ENCODE measurements at regions of chr17 and their contacts with region 1.

Region 1: DNA sequence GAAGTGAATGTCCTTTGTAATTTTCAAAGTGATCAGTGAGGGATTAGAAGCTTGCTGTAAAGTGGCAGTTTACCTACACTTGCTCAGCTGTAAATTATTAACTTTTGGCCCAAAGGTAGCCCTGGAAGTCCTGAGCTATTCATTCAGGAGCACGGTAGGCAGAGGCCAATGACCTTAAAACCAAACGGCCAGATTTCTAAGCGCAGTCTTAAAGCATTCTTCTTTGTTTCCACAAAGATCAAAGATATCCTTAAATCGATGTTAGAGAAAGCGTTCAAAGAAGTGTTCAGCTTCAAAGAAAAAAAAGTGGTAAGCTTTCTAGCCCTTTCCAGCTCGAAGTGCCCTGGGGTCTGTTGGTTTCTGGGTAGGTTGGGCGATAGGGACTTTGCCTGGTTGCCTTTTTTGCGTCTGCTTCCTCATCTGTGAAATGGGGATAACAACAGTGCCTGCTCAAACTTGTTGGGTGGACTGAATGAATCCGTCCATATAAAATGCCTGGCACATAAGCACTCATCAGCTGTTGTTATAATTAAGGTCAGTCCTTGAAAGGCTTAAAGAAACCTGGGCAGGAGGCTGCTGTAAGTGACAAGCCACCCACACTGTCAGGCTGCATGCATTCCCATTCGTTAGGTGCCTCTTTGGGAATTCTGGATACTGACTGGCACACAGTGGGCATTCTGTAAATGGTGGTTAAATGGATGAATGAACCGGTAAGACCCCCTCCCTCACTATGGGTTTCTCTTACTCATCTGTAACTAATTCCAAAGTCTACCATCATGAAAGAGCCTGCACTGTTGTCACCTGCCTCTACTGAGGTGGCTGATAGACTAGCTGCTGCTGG is 113.2 kb downstream of the PRKCA start:
- DNase-seq: peak; percentile 80 to 82
- H3K4me3 ChIP-seq: no peak overlapping the region
- H3K4me3 Mint-ChIP-seq: peak overlapping the region; percentile 50
- H3K27ac Mint-ChIP-seq: peak overlapping the region; percentile 60
- H3K4me1 ChIP-seq: peaks cover 72% of the 10 kb centered on the region
- H3K4me1 Mint-ChIP-seq: peaks cover 51% of the 10 kb centered on the region
- H3K27me3 ChIP-seq: no peaks in the 10 kb centered on the region
- H3K27me3 Mint-ChIP-seq: no peaks in the 10 kb centered on the region
- CTCF ChIP-seq: no peak

Region 2: GRCh38 chr17:66348584-66349165 is 66.9 kb before region 1 on chr17:
- CTCF ChIA-PET with region 1: interaction called, 4 read pairs
- POLR2A ChIA-PET with region 1: interaction called, 4 read pairs
- intact Hi-C with region 1: loop called (anchors 2 kb)
- DNase-seq: peak; percentile 63 to 69
- H3K4me3 ChIP-seq: no peak overlapping the region
- H3K4me3 Mint-ChIP-seq: peak overlapping the region; percentile 57
- H3K27ac Mint-ChIP-seq: peak overlapping the region; percentile 54
- H3K4me1 ChIP-seq: peaks cover 64% of the 10 kb centered on the region
- H3K4me1 Mint-ChIP-seq: peaks cover 30% of the 10 kb centered on the region
- H3K27me3 ChIP-seq: no peaks in the 10 kb centered on the region
- H3K27me3 Mint-ChIP-seq: no peaks in the 10 kb centered on the region
- CTCF ChIP-seq: no peak

Region 3: GRCh38 chr17:66359351-66359750 is 56.2 kb before region 1 on chr17:
- CTCF ChIA-PET with region 1: no interaction called
- POLR2A ChIA-PET with region 1: no interaction called
- intact Hi-C with region 1: no loop called
- DNase-seq: no peak
- H3K4me3 ChIP-seq: no peak overlapping the region
- H3K4me3 Mint-ChIP-seq: no peak overlapping the region
- H3K27ac Mint-ChIP-seq: no peak overlapping the region
- H3K4me1 ChIP-seq: no peaks in the 10 kb centered on the region
- H3K4me1 Mint-ChIP-seq: no peaks in the 10 kb centered on the region
- H3K27me3 ChIP-seq: no peaks in the 10 kb centered on the region
- H3K27me3 Mint-ChIP-seq: no peaks in the 10 kb centered on the region
- CTCF ChIP-seq: no peak

Region 4: DNA sequence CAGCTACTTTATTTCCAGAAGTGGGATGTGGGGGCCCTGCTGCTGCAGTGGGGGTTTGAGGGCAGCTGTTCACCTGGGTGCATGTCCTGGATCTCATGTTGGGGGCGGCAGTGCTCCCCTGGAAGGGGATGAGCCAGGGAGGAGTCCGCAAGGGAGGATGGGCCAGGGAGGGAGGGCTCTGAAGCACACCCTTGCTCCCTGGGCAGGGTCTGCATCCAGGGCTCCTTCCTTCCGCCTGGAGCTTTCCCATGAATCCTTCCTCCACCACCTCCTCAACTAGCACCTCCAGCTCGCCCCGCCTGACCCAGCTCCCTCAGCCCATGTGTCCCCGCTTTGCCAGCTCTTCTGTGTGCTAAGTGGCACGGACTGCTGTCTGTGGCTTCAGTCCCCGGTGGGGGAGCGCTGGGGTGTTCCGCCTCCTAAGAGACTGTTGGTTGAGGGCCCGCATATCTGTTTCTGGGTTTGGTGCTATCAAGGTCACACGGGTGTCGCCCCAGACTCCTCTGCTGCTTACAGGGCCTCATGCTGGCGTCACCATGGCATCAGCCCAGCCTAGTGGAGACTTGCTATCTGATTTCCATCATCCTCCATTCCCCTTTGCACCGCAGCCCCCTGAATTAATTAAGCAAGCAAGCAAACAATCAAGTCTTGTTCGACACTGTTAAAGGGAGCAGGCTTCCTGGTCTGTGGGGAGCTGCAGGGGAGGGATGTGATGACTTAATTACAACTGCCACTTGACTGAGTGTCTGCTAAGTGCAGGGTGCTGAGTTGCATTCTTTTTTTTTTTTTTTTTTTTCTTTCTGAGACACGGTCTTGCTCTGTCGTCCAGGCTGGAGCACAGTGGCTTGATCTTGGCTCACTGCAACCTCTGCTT is 41.4 kb before region 1 on chr17:
- CTCF ChIA-PET with region 1: interaction called, 5 read pairs
- POLR2A ChIA-PET with region 1: no interaction called
- intact Hi-C with region 1: loop called (anchors 5 kb)
- DNase-seq: no peak
- H3K4me3 ChIP-seq: no peak overlapping the region
- H3K4me3 Mint-ChIP-seq: no peak overlapping the region
- H3K27ac Mint-ChIP-seq: no peak overlapping the region
- H3K4me1 ChIP-seq: peaks cover 34% of the 10 kb centered on the region
- H3K4me1 Mint-ChIP-seq: peaks cover 20% of the 10 kb centered on the region
- H3K27me3 ChIP-seq: no peaks in the 10 kb centered on the region
- H3K27me3 Mint-ChIP-seq: no peaks in the 10 kb centered on the region
- CTCF ChIP-seq: no peak

Region 5: DNA sequence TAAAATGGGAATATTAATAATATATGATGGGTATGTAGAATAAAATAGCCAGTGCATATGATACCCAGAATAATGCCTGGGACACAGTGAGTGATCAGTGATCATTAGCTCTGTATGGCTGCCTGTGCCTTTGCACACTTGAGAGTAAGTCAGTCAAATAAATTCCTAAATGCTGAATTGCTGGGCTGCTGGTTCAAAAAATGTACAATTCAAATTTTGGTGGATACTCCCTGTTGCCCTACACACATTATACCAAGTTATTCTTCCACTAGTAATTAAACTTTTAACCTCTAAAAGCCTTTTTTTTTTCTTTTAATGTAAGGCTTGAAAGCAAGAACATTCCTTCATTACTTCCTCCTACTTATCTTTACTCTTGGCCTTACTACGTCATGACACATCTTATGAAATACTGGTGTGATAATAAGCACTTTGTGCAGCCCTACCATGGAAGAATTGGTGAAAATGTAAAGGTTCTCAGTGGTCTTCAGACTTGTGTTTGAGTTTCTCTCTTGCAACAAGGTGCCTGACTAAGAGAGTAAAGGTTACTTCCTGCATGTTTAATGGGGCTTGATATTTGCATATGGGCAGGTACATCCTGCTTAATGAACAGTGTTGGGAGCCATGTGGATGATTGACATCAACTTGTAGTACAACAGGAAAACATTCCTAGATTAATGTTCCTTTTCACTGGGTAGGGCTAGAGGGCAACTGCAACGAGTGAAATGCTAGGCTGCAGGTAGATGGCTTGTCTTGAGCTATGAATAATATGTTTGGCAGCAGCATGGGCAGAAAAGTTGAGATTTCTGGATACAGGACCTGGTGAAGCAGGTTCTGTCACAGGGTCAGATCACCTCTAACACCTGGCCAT is 28.9 kb before region 1 on chr17:
- CTCF ChIA-PET with region 1: no interaction called
- POLR2A ChIA-PET with region 1: interaction called, 5 read pairs
- intact Hi-C with region 1: loop called (anchors 1 kb)
- DNase-seq: peak; percentile 39 to 56
- H3K4me3 ChIP-seq: no peak overlapping the region
- H3K4me3 Mint-ChIP-seq: no peak overlapping the region
- H3K27ac Mint-ChIP-seq: peak overlapping the region; percentile 76
- H3K4me1 ChIP-seq: peaks cover 22% of the 10 kb centered on the region
- H3K4me1 Mint-ChIP-seq: peaks cover 11% of the 10 kb centered on the region
- H3K27me3 ChIP-seq: no peaks in the 10 kb centered on the region
- H3K27me3 Mint-ChIP-seq: no peaks in the 10 kb centered on the region
- CTCF ChIP-seq: no peak

Region 6: DNA sequence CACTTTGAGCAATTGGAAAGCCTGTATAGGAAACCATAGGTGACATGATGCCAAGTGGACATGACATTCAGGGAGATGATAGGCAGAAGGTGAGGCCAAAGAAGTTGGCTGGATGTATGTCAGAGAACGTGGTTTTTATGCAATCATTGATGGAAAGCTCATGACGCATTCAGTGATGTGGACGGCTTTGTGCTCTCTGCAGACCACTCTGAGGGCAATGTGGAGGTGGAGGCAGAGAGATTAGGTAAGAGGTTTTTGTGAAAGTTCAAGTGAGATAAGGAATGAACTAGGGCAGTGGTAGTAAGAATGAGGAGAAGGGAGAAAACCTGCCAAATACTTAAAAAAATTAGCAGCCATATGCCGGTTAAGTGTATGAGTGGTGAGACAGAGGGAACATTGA is 14.2 kb before region 1 on chr17:
- CTCF ChIA-PET with region 1: no interaction called
- POLR2A ChIA-PET with region 1: no interaction called
- intact Hi-C with region 1: no loop called
- DNase-seq: no peak
- H3K4me3 ChIP-seq: no peak overlapping the region
- H3K4me3 Mint-ChIP-seq: no peak overlapping the region
- H3K27ac Mint-ChIP-seq: no peak overlapping the region
- H3K4me1 ChIP-seq: no peaks in the 10 kb centered on the region; the same call in 1 of the 2 replicates
- H3K4me1 Mint-ChIP-seq: no peaks in the 10 kb centered on the region
- H3K27me3 ChIP-seq: no peaks in the 10 kb centered on the region
- H3K27me3 Mint-ChIP-seq: no peaks in the 10 kb centered on the region
- CTCF ChIP-seq: no peak

Region 7: GRCh38 chr17:66445229-66445628 is 29.6 kb after region 1 on chr17:
- CTCF ChIA-PET with region 1: no interaction called
- POLR2A ChIA-PET with region 1: no interaction called
- intact Hi-C with region 1: loop called (anchors 2 kb)
- DNase-seq: no peak
- H3K4me3 ChIP-seq: no peak overlapping the region
- H3K4me3 Mint-ChIP-seq: no peak overlapping the region
- H3K27ac Mint-ChIP-seq: peak overlapping the region; percentile 19
- H3K4me1 ChIP-seq: peaks cover 34% of the 10 kb centered on the region
- H3K4me1 Mint-ChIP-seq: peaks cover 67% of the 10 kb centered on the region
- H3K27me3 ChIP-seq: no peaks in the 10 kb centered on the region
- H3K27me3 Mint-ChIP-seq: no peaks in the 10 kb centered on the region
- CTCF ChIP-seq: no peak

Region 8: DNA sequence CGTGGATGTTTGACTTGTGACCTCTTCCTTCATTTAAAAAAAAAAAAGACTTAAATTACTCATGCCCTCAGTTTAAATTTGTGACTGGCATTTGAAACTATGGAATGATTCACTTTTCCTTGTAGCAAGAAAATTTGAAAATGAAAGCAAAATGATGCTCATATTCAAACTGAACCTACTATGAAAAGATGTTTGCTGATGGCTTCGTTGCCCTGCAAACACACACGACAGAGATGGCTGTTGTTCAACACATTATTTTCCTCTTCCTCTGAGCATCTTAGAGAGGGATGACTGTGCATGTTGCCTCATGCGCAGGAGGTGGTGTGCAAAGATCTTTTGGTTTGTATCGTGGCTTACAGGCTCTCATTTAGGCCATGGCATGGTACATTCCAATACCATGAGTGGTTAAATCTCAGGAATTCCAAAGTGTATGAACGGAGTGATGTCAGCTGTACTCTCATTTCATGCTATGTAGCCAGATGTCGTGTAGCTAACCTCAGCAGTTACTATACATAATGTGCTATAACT is 51.3 kb after region 1 on chr17:
- CTCF ChIA-PET with region 1: no interaction called
- POLR2A ChIA-PET with region 1: interaction called, 4 read pairs
- intact Hi-C with region 1: loop called (anchors 2 kb)
- DNase-seq: peak; percentile 72 to 76
- H3K4me3 ChIP-seq: no peak overlapping the region
- H3K4me3 Mint-ChIP-seq: peak overlapping the region; percentile 49
- H3K27ac Mint-ChIP-seq: peak overlapping the region; percentile 68
- H3K4me1 ChIP-seq: peaks cover 43% of the 10 kb centered on the region
- H3K4me1 Mint-ChIP-seq: peaks cover 31% of the 10 kb centered on the region
- H3K27me3 ChIP-seq: no peaks in the 10 kb centered on the region
- H3K27me3 Mint-ChIP-seq: no peaks in the 10 kb centered on the region
- CTCF ChIP-seq: no peak